Mammary epithelial cell (primary cell): ENCODE measurements at regions of chr3 and their contacts with region 1.

Region 1: GRCh38 chr3:127690823-127691452 is 18.2 kb downstream of the ABTB1 start:
- DNase-seq: peak; percentile 66
- H3K4me3 ChIP-seq: no peak overlapping the region
- H3K27ac ChIP-seq: peak overlapping the region; percentile 42
- H3K4me1 ChIP-seq: peaks cover 24% of the 10 kb centered on the region
- H3K27me3 ChIP-seq: no peaks in the 10 kb centered on the region
- CTCF ChIP-seq: peak; percentile 76 to 91

Region 2: GRCh38 chr3:127652231-127652995 is 38.5 kb before region 1 on chr3:
- CTCF ChIA-PET with region 1: no interaction called
- dilution Hi-C with region 1: no loop called
- in situ Hi-C with region 1: no loop called
- intact Hi-C with region 1: loop called (anchors 1 kb)
- DNase-seq: no peak
- H3K4me3 ChIP-seq: no peak overlapping the region
- H3K27ac ChIP-seq: no peak overlapping the region
- H3K4me1 ChIP-seq: no peaks in the 10 kb centered on the region
- H3K27me3 ChIP-seq: no peaks in the 10 kb centered on the region
- CTCF ChIP-seq: peak; percentile 69 to 91

Region 3: DNA sequence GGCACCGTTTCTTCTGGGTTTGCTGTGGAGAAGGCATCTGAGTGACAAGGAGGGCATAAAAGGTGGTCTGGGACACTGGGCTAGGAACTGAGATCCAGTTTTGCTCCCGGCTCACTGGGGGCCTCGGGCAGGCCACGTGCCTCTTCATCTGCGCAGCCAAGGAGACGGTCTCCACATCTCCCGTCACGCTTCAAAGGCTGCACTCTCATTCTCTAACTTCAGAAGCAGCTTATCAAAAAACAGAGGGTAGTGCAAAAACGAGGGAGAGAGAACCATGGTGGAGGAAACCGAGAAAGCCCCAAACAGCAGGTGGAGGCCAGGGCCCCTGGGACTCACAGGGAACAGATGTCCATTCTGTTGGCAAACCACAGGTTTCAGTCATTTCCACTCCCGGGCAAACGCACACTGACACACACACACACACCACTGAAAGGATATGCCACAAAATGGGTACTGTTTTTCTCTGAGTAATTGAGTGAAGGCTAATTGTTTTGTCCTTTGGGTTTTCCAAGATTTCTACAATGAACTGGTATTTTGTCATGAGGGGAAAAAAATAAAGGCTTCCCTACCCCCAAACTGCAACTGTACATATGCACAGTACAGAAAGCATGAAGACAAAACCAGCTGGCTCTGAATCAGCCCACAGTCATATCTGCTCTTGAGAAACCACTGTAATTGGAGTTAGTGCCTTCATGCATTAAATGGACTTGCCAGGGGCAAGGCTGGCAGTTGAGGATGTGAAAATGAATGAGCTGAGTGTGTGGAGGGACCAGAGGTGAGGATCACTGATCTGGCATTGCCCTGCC is 59.5 kb after region 1 on chr3:
- CTCF ChIA-PET with region 1: interaction called, 4 read pairs
- dilution Hi-C with region 1: no loop called
- in situ Hi-C with region 1: no loop called
- intact Hi-C with region 1: loop called (anchors 2 kb)
- DNase-seq: peak; percentile 98
- H3K4me3 ChIP-seq: no peak overlapping the region
- H3K27ac ChIP-seq: peak overlapping the region; percentile 70
- H3K4me1 ChIP-seq: peaks cover 47% of the 10 kb centered on the region
- H3K27me3 ChIP-seq: no peaks in the 10 kb centered on the region
- CTCF ChIP-seq: no peak

Region 4: GRCh38 chr3:127822698-127823425 is 131.9 kb after region 1 on chr3:
- CTCF ChIA-PET with region 1: no interaction called
- dilution Hi-C with region 1: no loop called
- in situ Hi-C with region 1: no loop called
- intact Hi-C with region 1: loop called (anchors 1 kb)
- DNase-seq: peak; percentile 32
- H3K4me3 ChIP-seq: peak overlapping the region; percentile 73 to 91 (median 77)
- H3K27ac ChIP-seq: peak overlapping the region; percentile 32
- H3K4me1 ChIP-seq: peaks cover 38% of the 10 kb centered on the region
- H3K27me3 ChIP-seq: no peaks in the 10 kb centered on the region
- CTCF ChIP-seq: no peak

Region 5: DNA sequence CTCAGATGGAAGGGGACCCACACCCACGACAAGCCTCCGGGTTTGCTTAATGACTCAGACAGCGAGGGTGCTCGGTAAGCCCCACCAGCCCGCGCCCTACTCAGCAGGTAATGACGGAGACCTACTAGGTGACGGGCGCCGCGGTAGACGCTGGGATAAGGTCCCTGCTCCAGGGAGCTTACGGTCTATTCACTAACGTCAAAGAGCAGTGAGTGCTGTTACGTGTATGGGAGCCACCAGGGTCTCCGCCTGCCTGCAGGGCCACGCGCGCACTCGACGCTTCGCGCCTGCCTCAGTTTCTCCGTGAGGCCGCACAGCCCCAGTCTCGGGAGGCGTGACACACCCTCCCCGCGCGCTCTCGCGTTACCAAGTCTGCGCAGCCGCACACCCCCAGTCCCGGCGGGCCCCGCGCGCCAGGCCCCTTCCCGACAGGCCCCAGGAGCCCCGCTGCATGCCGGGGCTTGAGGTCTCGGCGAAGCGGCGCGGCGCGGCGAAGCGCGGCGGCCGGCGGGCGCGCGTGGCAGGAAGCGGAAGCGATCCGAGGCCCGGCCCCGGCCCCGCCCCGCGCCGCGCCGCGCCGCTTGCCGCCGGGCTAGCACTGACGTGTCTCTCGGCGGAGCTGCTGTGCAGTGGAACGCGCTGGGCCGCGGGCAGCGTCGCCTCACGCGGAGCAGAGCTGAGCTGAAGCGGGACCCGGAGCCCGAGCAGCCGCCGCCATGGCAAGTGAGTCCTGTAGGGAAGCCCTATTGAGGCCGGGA is 361.1 kb after region 1 on chr3 and contains the start of gene SEC61A1:
- CTCF ChIA-PET with region 1: no interaction called
- dilution Hi-C with region 1: no loop called
- in situ Hi-C with region 1: no loop called
- intact Hi-C with region 1: loop called (anchors 5 kb)
- DNase-seq: peak; percentile 95
- H3K4me3 ChIP-seq: peak within 1 kb of the TSS; percentile 87 to 97 (median 89)
- H3K27ac ChIP-seq: peak within 1 kb of the TSS; percentile 92
- H3K4me1 ChIP-seq: peaks cover 34% of the 10 kb centered on the region
- H3K27me3 ChIP-seq: no peaks in the 10 kb centered on the region
- CTCF ChIP-seq: no peak
- total RNA-seq, gene SEC61A1: 291 to 353 TPM